Activated T-helper 1 cell treated with anti-CD3 and anti-CD28 coated beads, Interleukin-12 subunit alpha, Interleukin-12 subunit beta, Interleukin-2, Interleukin-4 antibody, amounts not matched to agents 30 ng/mL and 10 ng/mL and 1 ng/mL, durations not matched to agents 14 hours and 24 hours and 36 hours (primary cell): ENCODE measurements at regions of chr3 and their contacts with region 1.

Region 1: GRCh38 chr3:11096266-11097135 is 57.8 kb upstream of the HRH1 start:
- DNase-seq: peak; percentile 39
- H3K4me3 Mint-ChIP-seq: peak overlapping the region; percentile 8
- H3K27ac Mint-ChIP-seq: no peak overlapping the region
- H3K4me1 Mint-ChIP-seq: peaks cover 21% of the 10 kb centered on the region
- H3K27me3 Mint-ChIP-seq: peaks cover 5% of the 10 kb centered on the region

Region 2: DNA sequence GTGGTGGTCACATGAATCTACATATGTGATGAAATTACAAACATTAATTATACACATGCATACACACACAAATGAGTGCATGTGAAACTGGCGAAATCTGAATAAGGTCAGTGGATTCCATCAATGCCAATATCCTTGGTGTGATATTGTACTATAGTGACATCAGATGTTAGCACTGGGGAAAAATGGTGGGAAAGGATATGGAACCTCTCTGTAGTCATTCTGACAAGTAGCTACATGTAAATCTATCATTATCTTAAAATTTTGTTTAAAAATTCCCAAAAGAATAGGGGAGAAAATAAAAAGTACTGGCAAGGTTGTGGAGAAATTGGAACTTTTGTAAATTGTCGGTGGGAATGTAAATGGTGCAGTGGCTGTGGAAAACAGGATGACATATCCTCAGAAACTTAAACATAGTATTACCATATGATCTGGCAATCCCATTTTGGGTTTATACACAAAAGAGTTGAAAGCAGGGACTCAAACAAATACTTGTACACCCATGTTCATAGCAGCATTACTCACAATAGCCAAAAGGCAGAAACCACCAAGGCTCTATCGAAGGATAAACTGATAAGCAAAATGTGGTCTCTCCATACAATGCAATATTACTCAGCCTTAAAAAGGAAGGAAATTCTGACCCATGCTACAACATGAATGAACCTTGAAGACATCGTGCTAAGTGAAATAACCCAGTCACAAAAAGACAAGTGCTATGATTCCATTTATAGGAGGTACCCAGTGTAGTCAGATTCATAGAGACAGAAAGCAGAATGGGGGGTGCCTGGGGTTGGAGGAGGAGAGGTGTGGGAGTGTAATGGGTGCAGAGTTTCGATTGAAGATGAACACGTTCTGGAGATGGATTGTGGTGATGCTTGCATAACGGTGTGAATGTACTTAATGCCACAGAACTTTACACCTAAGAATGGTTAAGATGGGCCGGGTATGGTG is 32.5 kb after region 1 on chr3:
- intact Hi-C with region 1: loop called (anchors 2 kb)
- DNase-seq: no peak
- H3K4me3 Mint-ChIP-seq: no peak overlapping the region
- H3K27ac Mint-ChIP-seq: peak overlapping the region; percentile 50
- H3K4me1 Mint-ChIP-seq: peaks cover 8% of the 10 kb centered on the region
- H3K27me3 Mint-ChIP-seq: peaks cover 2% of the 10 kb centered on the region

Region 3: DNA sequence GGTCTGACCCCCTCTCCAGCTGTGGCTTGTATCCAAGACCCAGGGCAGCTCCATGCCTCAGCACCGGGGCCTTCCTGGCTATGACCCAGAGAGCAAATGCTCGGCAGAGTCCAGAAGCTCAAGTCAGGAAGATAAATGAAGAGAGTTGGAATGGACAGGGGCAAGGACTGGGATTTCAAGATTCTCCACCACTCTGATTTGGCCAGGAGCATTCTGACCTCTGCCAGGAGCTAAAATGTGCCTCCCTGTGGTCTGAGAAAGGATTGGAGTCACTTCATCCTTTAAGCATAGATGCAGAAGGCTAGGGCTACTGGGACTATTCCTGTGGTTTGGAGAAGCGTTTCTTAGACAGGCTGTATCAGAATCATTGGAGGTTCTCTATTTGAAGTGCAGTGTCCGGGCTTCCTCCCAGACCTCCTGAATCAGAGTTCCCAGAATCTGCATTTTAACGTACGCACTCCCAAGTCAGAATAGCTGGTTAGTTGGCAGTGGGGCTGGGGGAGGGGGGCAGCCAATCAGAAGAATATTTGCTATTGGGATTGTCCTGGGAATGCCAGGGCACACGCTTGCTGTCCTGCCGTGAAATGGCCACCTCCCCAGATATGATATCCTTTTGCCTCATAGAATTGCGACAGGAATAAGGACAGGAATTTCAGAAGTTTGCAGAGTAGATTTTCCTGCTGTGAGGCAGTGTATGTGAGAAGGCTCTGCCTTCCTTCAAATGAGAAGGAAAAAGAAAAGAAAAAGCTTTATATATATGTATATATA is 115.2 kb after region 1 on chr3:
- intact Hi-C with region 1: no loop called
- DNase-seq: no peak
- H3K4me3 Mint-ChIP-seq: no peak overlapping the region
- H3K27ac Mint-ChIP-seq: no peak overlapping the region
- H3K4me1 Mint-ChIP-seq: no peaks in the 10 kb centered on the region
- H3K27me3 Mint-ChIP-seq: peaks cover 28% of the 10 kb centered on the region